Activated CD4-positive, alpha-beta T cell treated with anti-CD3 and anti-CD28 coated beads, Interleukin-2, amount 10 ng/mL, durations not matched to agents 7 days and 5 days (primary cell): ENCODE measurements at regions of chr11 and their contacts with region 1.

Region 1: GRCh38 chr11:14907411-14908213 is 15.6 kb upstream of the CYP2R1 start:
- DNase-seq: peak; percentile 88
- H3K4me3 Mint-ChIP-seq: no peak overlapping the region
- H3K27ac Mint-ChIP-seq: no peak overlapping the region
- H3K4me1 Mint-ChIP-seq: peaks cover 50% of the 10 kb centered on the region
- H3K27me3 Mint-ChIP-seq: no peaks in the 10 kb centered on the region

Region 2: DNA sequence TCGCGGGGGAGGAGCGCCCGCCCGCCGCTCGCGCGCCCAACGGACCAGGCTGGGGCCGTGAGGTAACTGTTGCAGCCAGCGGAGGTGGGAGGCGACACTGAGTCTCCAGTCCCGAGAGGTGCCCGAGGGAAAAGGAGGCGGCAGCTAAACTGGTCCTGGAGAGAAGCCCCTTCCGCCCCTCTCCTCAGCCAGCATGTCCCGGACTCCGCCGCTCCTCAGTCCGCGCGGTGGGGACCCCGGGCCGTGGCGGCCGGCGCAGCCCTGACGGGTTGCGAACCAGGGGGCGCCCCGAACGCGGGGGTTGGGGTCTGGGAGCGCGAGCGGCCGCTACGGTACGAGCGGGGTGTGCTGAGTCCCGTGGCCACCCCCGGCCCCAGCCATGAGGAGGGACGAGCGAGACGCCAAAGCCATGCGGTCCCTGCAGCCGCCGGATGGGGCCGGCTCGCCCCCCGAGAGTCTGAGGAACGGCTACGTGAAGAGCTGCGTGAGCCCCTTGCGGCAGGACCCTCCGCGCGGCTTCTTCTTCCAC is 263.9 kb before region 1 on chr11 and contains the start of gene PDE3B:
- CTCF ChIA-PET with region 1: interaction called, 12 read pairs
- POLR2A ChIA-PET with region 1: no interaction called
- DNase-seq: peak; percentile 82
- H3K4me3 Mint-ChIP-seq: peak within 1 kb of the TSS; percentile 82
- H3K27ac Mint-ChIP-seq: peak within 1 kb of the TSS; percentile 87
- H3K4me1 Mint-ChIP-seq: peaks cover 44% of the 10 kb centered on the region
- H3K27me3 Mint-ChIP-seq: no peaks in the 10 kb centered on the region
- total RNA-seq, gene PDE3B: 96.6 to 101 TPM

Region 3: DNA sequence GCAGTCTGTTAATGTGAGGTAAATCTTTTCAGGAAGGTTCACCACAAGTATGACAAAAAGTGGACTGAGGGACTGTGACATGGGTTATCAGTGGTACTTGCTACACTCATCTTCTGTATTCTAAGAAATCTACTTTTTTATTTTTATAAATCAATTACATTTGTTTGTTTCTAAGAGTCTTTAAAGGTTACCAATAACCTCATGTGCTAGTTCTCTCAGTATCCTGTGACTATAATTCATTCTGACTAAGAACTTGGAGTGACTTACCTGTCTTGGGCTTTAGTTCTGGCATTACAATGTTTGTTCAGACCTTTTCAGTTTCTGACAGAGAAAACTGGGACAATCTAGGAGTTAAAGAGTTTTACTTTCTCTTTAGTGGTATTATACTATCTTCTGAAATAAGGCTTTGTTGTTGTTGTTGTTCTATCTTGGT is 155.6 kb before region 1 on chr11:
- CTCF ChIA-PET with region 1: no interaction called
- POLR2A ChIA-PET with region 1: no interaction called
- DNase-seq: no peak
- H3K4me3 Mint-ChIP-seq: no peak overlapping the region
- H3K27ac Mint-ChIP-seq: peak overlapping the region; percentile 34
- H3K4me1 Mint-ChIP-seq: peaks cover 47% of the 10 kb centered on the region
- H3K27me3 Mint-ChIP-seq: no peaks in the 10 kb centered on the region

Region 4: DNA sequence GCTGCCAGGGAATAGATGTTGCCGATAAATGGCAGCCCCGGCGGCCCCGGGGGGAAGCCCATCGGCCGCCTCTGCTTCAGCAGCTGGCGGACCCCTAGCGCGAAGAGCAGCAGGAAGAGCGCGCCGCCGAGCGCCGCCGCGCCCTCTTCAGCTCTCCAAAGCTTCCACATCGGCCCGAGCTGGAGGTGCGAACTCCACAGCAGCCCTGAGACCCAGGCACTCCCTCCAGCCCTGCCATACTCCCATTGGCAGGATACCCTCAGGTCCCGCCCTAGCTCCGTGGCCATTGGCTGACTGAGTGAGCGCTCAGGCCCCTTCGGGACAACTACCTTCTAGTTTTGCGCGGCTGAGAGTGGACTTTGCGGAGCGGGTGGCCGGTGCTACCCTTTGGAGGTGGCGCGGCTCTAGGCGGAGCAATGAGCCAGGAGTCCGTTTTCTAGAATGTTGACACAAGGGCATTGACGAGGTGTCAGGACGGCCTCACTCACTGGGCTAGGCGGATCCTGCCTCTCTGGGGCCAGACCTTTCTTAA is 15.5 kb before region 1 on chr11 and contains the start of gene CYP2R1:
- CTCF ChIA-PET with region 1: interaction called, 88 read pairs
- POLR2A ChIA-PET with region 1: no interaction called
- DNase-seq: peak; percentile 94
- H3K4me3 Mint-ChIP-seq: peak within 1 kb of the TSS; percentile 81
- H3K27ac Mint-ChIP-seq: peak within 1 kb of the TSS; percentile 91
- H3K4me1 Mint-ChIP-seq: peaks cover 55% of the 10 kb centered on the region
- H3K27me3 Mint-ChIP-seq: no peaks in the 10 kb centered on the region
- total RNA-seq, gene CYP2R1: 15.5 to 16.1 TPM

Region 5: GRCh38 chr11:14934641-14935351 is 27.2 kb after region 1 on chr11:
- CTCF ChIA-PET with region 1: interaction called, 11 read pairs
- POLR2A ChIA-PET with region 1: no interaction called
- DNase-seq: no peak
- H3K4me3 Mint-ChIP-seq: no peak overlapping the region
- H3K27ac Mint-ChIP-seq: no peak overlapping the region
- H3K4me1 Mint-ChIP-seq: no peaks in the 10 kb centered on the region
- H3K27me3 Mint-ChIP-seq: no peaks in the 10 kb centered on the region